ENCODE measurements at regions of chr2 and their contacts with region 1.

Region 1: DNA sequence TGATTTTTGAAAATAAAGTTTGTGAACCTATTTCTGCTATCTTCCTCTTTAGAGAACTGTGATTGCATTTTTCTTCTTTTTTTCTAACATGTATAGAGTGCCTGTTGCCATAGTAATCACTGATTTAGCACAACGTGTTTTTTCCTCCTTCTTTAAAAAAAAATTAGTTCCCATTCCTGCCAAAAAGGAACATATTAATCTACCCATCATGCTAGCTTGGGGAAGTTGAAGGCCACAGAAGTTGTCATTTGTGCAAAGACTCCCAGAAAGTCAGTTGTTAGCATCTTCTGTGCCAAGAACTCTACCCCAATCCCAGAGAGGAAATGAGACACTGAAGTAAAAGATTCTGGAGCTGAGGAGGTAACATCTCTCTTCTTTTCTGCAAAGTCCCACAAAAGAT is 57.3 kb downstream of the SLC8A1 start:
- DNase-seq: peak; percentile 54 to 74 (median 60)
- H3K4me3 ChIP-seq: peak overlapping the region in 1 of 3 experiments; percentile 35
- H3K4me3 Mint-ChIP-seq: peak overlapping the region in 1 of 2 donors; percentile 32
- H3K27ac ChIP-seq: peak overlapping the region; percentile 42 to 85
- H3K27ac Mint-ChIP-seq: peak overlapping the region; percentile 83 to 96 (median 91)
- H3K4me1 ChIP-seq: peaks cover 40 to 59% of the 10 kb centered on the region in 2 donors
- H3K4me1 Mint-ChIP-seq: peaks cover 67% of the 10 kb centered on the region
- H3K27me3 ChIP-seq: no peaks in the 10 kb centered on the region
- H3K27me3 Mint-ChIP-seq: peaks cover 0 to 2% (median 0%) of the 10 kb centered on the region in 3 donors
- CTCF ChIP-seq: no peak

Region 2: DNA sequence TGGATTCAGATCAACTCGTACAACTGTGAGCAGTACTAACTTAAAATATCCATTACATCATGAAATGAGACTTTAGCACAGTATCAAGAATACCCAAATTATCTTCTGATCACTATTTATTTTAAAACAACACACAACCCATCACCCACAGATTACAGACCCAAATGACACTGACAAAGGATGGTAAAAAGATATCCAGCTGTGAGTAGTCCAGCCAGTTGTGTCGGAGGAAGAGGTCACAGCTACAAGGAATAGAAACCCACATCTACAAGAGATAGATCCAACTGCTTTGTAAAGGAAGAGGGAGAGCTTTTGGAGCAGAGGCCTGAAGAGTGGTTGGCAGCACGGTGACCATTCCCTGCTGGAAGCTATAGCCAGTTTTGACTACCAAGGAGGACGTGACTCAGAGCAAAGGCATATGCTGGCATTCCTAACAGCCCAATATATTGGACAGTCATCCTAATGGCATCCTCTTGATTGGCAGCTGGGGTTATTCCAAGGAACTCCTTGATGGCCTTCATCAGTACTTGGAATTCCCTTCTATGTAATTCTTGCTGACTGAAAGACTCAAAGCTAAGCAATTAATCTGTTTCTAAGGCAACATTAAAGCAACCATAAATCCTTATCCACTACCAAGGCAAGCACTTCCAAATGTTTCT is 40.2 kb after region 1 on chr2:
- intact Hi-C with region 1: loop called in 1 of 2 experiments (anchors 5 kb)
- DNase-seq: no peak
- H3K4me3 ChIP-seq: no peak overlapping the region
- H3K4me3 Mint-ChIP-seq: no peak overlapping the region
- H3K27ac ChIP-seq: peak overlapping the region in 1 of 2 donors; percentile 22
- H3K27ac Mint-ChIP-seq: peak overlapping the region in 2 of 7 donors; percentile 6 to 66
- H3K4me1 ChIP-seq: peaks cover 43% of the 10 kb centered on the region in 2 donors
- H3K4me1 Mint-ChIP-seq: peaks cover 66% of the 10 kb centered on the region
- H3K27me3 ChIP-seq: no peaks in the 10 kb centered on the region
- H3K27me3 Mint-ChIP-seq: no peaks in the 10 kb centered on the region
- CTCF ChIP-seq: no peak

Measured in CD14-positive monocyte (primary cell).